ENCODE measurements at regions of chr14 and their contacts with region 1.

Region 1: DNA sequence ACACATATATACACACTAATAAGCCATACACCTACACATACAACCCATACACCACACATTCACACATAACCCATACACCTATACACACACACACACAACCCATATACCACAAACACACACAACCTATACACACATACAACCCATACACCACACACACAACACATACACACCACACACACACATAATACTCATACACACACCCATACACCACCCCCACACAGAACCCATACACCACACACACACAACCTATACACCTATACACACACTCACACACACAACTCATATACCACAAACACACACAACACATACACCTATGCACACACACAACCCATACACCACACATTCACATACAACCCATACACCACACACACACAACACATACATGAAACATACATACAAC is 44.1 kb downstream of the TMEM121 start:
- DNase-seq: peak; percentile 18
- ATAC-seq: no peak
- H3K4me3 ChIP-seq: peak overlapping the region in 1 of 5 experiments; percentile 12
- H3K4me3 Mint-ChIP-seq: peak overlapping the region; percentile 38
- H3K27ac ChIP-seq: peak overlapping the region; percentile 93 to 94
- H3K27ac Mint-ChIP-seq: peak overlapping the region; percentile 93
- H3K4me1 ChIP-seq: peaks cover 61 to 88% of the 10 kb centered on the region in 2 donors
- H3K4me1 Mint-ChIP-seq: peaks cover 52% of the 10 kb centered on the region
- H3K27me3 ChIP-seq: no peaks in the 10 kb centered on the region
- H3K27me3 Mint-ChIP-seq: no peaks in the 10 kb centered on the region
- CTCF ChIP-seq: no peak

Region 2: DNA sequence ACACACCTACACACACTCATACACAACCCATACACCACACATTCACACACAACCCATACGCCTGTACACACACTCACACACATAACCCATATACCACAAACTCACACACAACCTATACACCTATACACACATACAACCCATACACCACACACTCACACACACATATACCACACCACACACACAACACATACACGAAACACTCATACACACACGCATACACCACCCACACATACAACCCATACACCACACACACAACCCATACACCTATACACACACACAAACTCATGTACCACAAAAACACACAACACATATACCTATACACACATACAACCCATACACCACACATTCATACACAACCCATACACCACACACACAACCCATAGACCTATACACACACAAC is 120.2 kb after region 1 on chr14:
- CTCF ChIA-PET with region 1: no interaction called
- POLR2A ChIA-PET with region 1: no interaction called
- intact Hi-C with region 1: loop called (anchors 5 kb)
- DNase-seq: peak; percentile 39
- ATAC-seq: no peak
- H3K4me3 ChIP-seq: peak overlapping the region in 1 of 5 experiments; percentile 36
- H3K4me3 Mint-ChIP-seq: peak overlapping the region; percentile 12
- H3K27ac ChIP-seq: peak overlapping the region; percentile 75 to 95
- H3K27ac Mint-ChIP-seq: peak overlapping the region; percentile 92
- H3K4me1 ChIP-seq: peaks cover 69 to 81% of the 10 kb centered on the region in 2 donors
- H3K4me1 Mint-ChIP-seq: peaks cover 66% of the 10 kb centered on the region
- H3K27me3 ChIP-seq: no peaks in the 10 kb centered on the region
- H3K27me3 Mint-ChIP-seq: no peaks in the 10 kb centered on the region
- CTCF ChIP-seq: no peak